ENCODE measurements at regions of chr6 and their contacts with region 1.

Region 1: DNA sequence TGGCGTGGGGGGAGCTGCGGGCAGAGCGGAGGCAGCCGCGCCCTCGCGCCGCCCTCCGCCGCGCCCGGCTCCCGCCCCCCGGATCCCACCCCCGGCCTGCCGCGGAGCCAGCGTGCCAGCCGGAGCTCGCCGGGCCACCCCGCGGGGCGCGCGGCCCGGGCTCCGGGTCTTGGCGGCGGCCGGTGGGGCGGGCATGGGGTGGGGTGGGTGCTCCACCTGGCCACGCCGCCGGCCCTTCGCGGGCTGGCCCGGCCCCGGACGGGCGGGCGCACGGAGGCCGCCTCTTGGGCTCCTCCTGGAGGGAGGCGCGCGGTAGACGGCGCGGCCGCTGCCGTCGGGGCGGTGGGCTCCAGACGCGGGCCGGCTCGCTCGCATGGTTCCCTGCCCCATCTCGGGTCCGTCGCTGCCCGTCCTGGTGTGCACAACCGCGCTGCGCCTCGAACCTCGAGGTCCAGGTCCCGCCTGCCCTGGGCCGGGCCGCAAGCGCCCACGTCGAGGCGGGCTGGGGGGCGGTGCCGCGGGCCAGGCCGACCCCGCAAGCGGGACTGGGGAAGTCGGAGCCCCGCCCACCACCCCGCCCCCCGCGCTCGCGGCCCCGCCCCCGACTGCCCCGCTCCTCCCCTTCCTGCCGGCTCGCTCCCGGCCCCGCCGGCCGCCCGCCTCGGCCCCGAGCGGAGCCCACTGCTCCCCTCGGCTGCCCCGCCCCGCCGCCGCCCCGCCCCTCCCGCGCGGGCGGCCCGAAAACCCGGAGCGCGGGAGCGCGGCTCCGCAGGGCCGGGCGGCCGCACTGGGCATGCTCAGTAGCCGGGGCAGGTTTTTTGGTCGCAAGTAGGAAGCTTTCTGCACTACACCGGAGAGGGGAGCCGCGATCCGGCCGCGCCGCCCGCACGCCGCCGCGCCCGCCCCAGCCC is at the start of gene CDYL:
- DNase-seq: peak in 1 of 2 experiments; percentile 92
- H3K4me3 ChIP-seq: peak within 1 kb of the TSS; percentile 59; the same call in 1 of the 2 replicates
- H3K27ac ChIP-seq: no peak within 1 kb of the TSS
- H3K4me1 ChIP-seq: no peaks in the 10 kb centered on the region
- H3K27me3 ChIP-seq: no peaks in the 10 kb centered on the region
- CTCF ChIP-seq: no peak
- total RNA-seq, gene CDYL: 52.7 and 60.8 TPM in 2 replicates

Region 2: GRCh38 chr6:4358414-4359114 is 417.3 kb before region 1 on chr6:
- CTCF ChIA-PET with region 1: no interaction called
- POLR2A ChIA-PET with region 1: no interaction called
- intact Hi-C with region 1: loop called (anchors 1 kb)
- DNase-seq: peak; percentile 98
- H3K4me3 ChIP-seq: peak overlapping the region; percentile 49; the same call in 1 of the 2 replicates
- H3K27ac ChIP-seq: peak overlapping the region; percentile 100
- H3K4me1 ChIP-seq: peaks cover 55% of the 10 kb centered on the region
- H3K27me3 ChIP-seq: no peaks in the 10 kb centered on the region
- CTCF ChIP-seq: no peak

Region 3: DNA sequence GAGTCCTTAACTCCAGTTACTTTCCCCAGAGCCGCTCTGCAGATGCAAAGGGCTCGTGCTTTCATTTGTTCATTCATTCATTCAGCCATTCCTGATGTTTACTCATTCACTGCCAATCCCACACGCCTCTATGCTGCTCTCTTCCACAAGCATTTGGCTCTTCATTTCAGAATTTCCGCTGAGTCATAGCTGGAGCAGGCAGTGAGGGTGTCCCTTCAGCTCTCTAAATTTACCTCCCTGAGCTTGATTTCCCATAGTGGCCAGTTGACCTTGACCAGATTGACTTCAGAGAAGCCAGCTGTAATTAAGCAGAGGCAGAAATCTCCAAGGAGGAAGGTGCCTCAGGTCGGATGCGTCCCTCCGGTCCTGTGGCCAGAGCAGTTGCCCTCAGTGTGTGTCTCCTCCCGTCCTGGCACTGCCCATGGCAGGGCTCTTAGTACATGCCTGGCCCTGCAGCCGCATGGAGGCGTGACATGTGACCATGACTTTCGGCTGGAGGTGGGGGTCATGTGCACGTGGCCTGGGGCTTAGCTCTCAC is 373.3 kb before region 1 on chr6:
- CTCF ChIA-PET with region 1: no interaction called
- POLR2A ChIA-PET with region 1: interaction called, 4 read pairs
- intact Hi-C with region 1: loop called (anchors 1 kb)
- DNase-seq: peak; percentile 25 to 40
- H3K4me3 ChIP-seq: no peak overlapping the region
- H3K27ac ChIP-seq: peak overlapping the region; percentile 51; the same call in 1 of the 2 replicates
- H3K4me1 ChIP-seq: peaks cover 12% of the 10 kb centered on the region
- H3K27me3 ChIP-seq: no peaks in the 10 kb centered on the region
- CTCF ChIP-seq: no peak

Region 4: GRCh38 chr6:4563156-4563555 is 212.7 kb before region 1 on chr6:
- CTCF ChIA-PET with region 1: no interaction called
- POLR2A ChIA-PET with region 1: no interaction called
- intact Hi-C with region 1: no loop called
- DNase-seq: no peak
- H3K4me3 ChIP-seq: no peak overlapping the region
- H3K27ac ChIP-seq: no peak overlapping the region
- H3K4me1 ChIP-seq: no peaks in the 10 kb centered on the region
- H3K27me3 ChIP-seq: no peaks in the 10 kb centered on the region
- CTCF ChIP-seq: no peak

Region 5: GRCh38 chr6:4647414-4648365 is 128.1 kb before region 1 on chr6:
- CTCF ChIA-PET with region 1: no interaction called
- POLR2A ChIA-PET with region 1: no interaction called
- intact Hi-C with region 1: loop called (anchors 10 kb)
- DNase-seq: peak; percentile 40 to 69
- H3K4me3 ChIP-seq: peak overlapping the region; percentile 46
- H3K27ac ChIP-seq: no peak overlapping the region
- H3K4me1 ChIP-seq: peaks cover 14% of the 10 kb centered on the region; the same call in 1 of the 2 replicates
- H3K27me3 ChIP-seq: no peaks in the 10 kb centered on the region
- CTCF ChIP-seq: no peak

Region 6: GRCh38 chr6:4941782-4942672 is 166.2 kb after region 1 on chr6:
- CTCF ChIA-PET with region 1: interaction called, 5 read pairs
- POLR2A ChIA-PET with region 1: no interaction called
- intact Hi-C with region 1: loop called (anchors 2 kb)
- DNase-seq: peak; percentile 80 to 89
- H3K4me3 ChIP-seq: no peak overlapping the region
- H3K27ac ChIP-seq: peak overlapping the region; percentile 66
- H3K4me1 ChIP-seq: peaks cover 32% of the 10 kb centered on the region
- H3K27me3 ChIP-seq: no peaks in the 10 kb centered on the region
- CTCF ChIP-seq: no peak